ENCODE measurements at regions of chr18 and their contacts with region 1.

Region 1: GRCh38 chr18:33184958-33185357 is 255.6 kb downstream of the CCDC178 start:
- DNase-seq: peak; percentile 12
- H3K4me3 ChIP-seq: no peak overlapping the region
- H3K27ac ChIP-seq: peak overlapping the region; percentile 77
- H3K4me1 ChIP-seq: peaks cover 16% of the 10 kb centered on the region
- H3K27me3 ChIP-seq: no peaks in the 10 kb centered on the region
- CTCF ChIP-seq: no peak
- POLR2A ChIP-seq: no peak

Region 2: GRCh38 chr18:32494111-32494510 is 690.8 kb before region 1 on chr18:
- CTCF ChIA-PET with region 1: no interaction called
- POLR2A ChIA-PET with region 1: no interaction called
- dilution Hi-C with region 1: no loop called
- intact Hi-C with region 1: no loop called
- DNase-seq: no peak
- H3K4me3 ChIP-seq: no peak overlapping the region
- H3K27ac ChIP-seq: no peak overlapping the region
- H3K4me1 ChIP-seq: no peaks in the 10 kb centered on the region
- H3K27me3 ChIP-seq: no peaks in the 10 kb centered on the region
- CTCF ChIP-seq: no peak
- POLR2A ChIP-seq: no peak

Region 3: DNA sequence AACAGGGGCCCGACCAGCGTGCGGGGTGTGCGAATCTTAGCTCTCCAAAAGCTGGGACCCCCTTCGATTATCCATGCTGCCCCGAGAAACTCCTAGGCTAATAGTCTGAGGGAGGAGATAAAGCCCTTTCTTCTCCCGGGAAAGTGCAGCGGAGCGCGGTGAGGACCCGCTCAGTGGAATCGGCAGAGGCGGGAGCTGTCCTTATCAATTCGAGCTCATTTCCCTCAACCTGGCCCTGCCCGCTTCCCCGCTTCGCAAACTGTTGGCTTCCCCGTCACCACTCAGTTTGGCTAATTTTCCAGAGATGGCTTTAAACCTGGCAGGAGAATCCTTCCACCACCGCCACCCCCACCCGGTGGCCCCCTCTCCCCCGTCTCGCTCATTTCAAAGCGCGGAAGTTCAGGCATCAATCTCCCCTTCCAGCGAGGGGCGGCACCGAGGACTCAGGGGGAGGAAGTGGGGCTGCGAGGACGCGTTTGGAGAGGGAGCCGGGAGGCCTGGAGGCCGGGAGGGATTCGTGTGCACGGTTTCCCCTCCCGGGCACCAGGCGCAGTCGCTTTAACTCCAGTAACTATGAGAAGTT is 413.7 kb before region 1 on chr18:
- CTCF ChIA-PET with region 1: no interaction called
- POLR2A ChIA-PET with region 1: no interaction called
- dilution Hi-C with region 1: no loop called
- intact Hi-C with region 1: loop called (anchors 2 kb)
- DNase-seq: no peak
- H3K4me3 ChIP-seq: peak overlapping the region; percentile 31 to 50 (median 37)
- H3K27ac ChIP-seq: no peak overlapping the region
- H3K4me1 ChIP-seq: peaks cover 13% of the 10 kb centered on the region
- H3K27me3 ChIP-seq: peaks cover 40 to 51% of the 10 kb centered on the region in 2 experiments
- CTCF ChIP-seq: no peak
- POLR2A ChIP-seq: no peak

Region 4: GRCh38 chr18:32911660-32912284 is 273.2 kb before region 1 on chr18:
- CTCF ChIA-PET with region 1: no interaction called
- POLR2A ChIA-PET with region 1: no interaction called
- dilution Hi-C with region 1: no loop called
- intact Hi-C with region 1: no loop called
- DNase-seq: no peak
- H3K4me3 ChIP-seq: no peak overlapping the region
- H3K27ac ChIP-seq: no peak overlapping the region
- H3K4me1 ChIP-seq: no peaks in the 10 kb centered on the region
- H3K27me3 ChIP-seq: peaks cover 3 to 4% of the 10 kb centered on the region in 2 experiments
- CTCF ChIP-seq: no peak
- POLR2A ChIP-seq: no peak

Region 5: DNA sequence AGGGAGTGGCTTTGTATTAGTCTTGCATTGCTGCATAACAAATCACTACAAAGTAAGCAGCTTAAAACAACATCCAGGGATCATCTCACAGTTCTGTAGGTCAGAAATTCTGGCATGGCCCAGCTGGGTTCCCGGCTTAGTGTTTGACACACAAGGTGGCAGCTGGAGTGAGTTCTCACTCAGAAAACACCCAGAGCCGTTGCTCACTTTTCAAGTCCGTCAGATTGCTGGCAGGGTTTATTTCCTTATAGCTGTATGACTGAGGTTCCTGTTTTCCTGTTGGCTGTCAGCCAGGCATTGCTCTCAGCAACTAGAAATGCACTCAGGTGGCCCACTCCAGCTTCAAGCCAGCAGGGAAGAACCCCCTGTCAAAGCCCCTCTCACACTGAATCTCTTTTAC is 68.6 kb before region 1 on chr18:
- CTCF ChIA-PET with region 1: no interaction called
- POLR2A ChIA-PET with region 1: no interaction called
- dilution Hi-C with region 1: no loop called
- intact Hi-C with region 1: loop called (anchors 5 kb)
- DNase-seq: peak; percentile 87
- H3K4me3 ChIP-seq: no peak overlapping the region
- H3K27ac ChIP-seq: no peak overlapping the region
- H3K4me1 ChIP-seq: peaks cover 11% of the 10 kb centered on the region
- H3K27me3 ChIP-seq: no peaks in the 10 kb centered on the region
- CTCF ChIP-seq: no peak
- POLR2A ChIP-seq: no peak

Region 6: GRCh38 chr18:33135951-33136660 is 48.9 kb before region 1 on chr18:
- CTCF ChIA-PET with region 1: no interaction called
- POLR2A ChIA-PET with region 1: no interaction called
- dilution Hi-C with region 1: no loop called
- intact Hi-C with region 1: loop called (anchors 5 kb)
- DNase-seq: peak; percentile 93
- H3K4me3 ChIP-seq: peak overlapping the region in 1 of 3 experiments; percentile 19
- H3K27ac ChIP-seq: peak overlapping the region; percentile 84
- H3K4me1 ChIP-seq: peaks cover 21% of the 10 kb centered on the region
- H3K27me3 ChIP-seq: no peaks in the 10 kb centered on the region
- CTCF ChIP-seq: no peak
- POLR2A ChIP-seq: peak; percentile 38

Region 7: GRCh38 chr18:33282709-33283333 is 97.9 kb after region 1 on chr18:
- CTCF ChIA-PET with region 1: no interaction called
- POLR2A ChIA-PET with region 1: no interaction called
- dilution Hi-C with region 1: no loop called
- intact Hi-C with region 1: no loop called
- DNase-seq: no peak
- H3K4me3 ChIP-seq: no peak overlapping the region
- H3K27ac ChIP-seq: no peak overlapping the region
- H3K4me1 ChIP-seq: no peaks in the 10 kb centered on the region
- H3K27me3 ChIP-seq: no peaks in the 10 kb centered on the region
- CTCF ChIP-seq: no peak
- POLR2A ChIP-seq: no peak

Measured in endothelial cell of umbilical vein (primary cell).